ENCODE measurements at regions of chr10 and their contacts with region 1.

Region 1: GRCh38 chr10:56470701-56471100 is 109.6 kb upstream of the ZWINT start:
- DNase-seq: no peak
- ATAC-seq: no peak
- H3K4me3 ChIP-seq: no peak overlapping the region
- H3K27ac ChIP-seq: no peak overlapping the region
- H3K4me1 ChIP-seq: no peaks in the 10 kb centered on the region
- H3K27me3 ChIP-seq: no peaks in the 10 kb centered on the region
- CTCF ChIP-seq: no peak

Region 2: DNA sequence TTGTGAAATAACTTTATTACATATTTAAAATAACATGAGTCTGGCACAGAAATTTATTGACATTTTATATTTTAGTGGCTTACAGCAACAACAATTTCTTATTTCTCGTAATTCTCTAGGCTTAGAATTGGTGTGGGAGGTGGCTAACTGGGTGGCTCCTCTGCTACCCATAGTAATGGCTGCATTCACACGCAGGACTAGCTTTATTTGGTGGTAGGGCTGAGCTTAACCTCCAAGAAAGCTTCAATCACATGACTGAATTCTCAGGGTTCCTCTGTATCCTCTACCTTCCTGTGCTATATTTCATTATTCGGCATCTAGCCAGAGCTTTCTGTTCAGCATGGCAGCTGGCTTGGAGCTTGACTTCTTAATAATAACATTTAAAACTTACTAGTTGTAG is 248.5 kb before region 1 on chr10:
- CTCF ChIA-PET with region 1: no interaction called
- POLR2A ChIA-PET with region 1: no interaction called
- intact Hi-C with region 1: no loop called
- DNase-seq: no peak
- ATAC-seq: no peak
- H3K4me3 ChIP-seq: no peak overlapping the region
- H3K27ac ChIP-seq: no peak overlapping the region
- H3K4me1 ChIP-seq: no peaks in the 10 kb centered on the region
- H3K27me3 ChIP-seq: no peaks in the 10 kb centered on the region
- CTCF ChIP-seq: no peak

Region 3: GRCh38 chr10:56662765-56663447 is 192.2 kb after region 1 on chr10:
- CTCF ChIA-PET with region 1: no interaction called
- POLR2A ChIA-PET with region 1: no interaction called
- intact Hi-C with region 1: no loop called
- DNase-seq: no peak
- ATAC-seq: no peak
- H3K4me3 ChIP-seq: no peak overlapping the region
- H3K27ac ChIP-seq: no peak overlapping the region
- H3K4me1 ChIP-seq: no peaks in the 10 kb centered on the region
- H3K27me3 ChIP-seq: no peaks in the 10 kb centered on the region
- CTCF ChIP-seq: no peak

Region 4: DNA sequence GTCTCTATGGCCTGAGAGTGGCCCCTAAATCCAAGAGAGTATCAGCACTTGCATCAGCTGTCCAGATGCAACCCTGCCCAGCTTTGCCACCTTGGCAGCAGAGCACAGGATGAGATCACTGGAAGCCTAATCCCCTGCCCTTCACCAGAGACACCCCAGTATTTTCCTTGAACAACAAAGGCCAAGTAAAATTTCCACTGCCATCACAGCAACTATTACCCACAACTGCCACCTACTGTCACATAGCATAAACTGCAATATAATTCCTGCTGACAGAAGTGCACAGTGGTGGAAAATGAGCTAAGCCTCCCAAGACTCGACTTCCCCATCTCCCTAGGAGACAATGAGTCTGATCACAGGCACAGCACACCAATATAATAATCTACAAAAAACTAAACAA is 353.1 kb after region 1 on chr10:
- CTCF ChIA-PET with region 1: interaction called, 3 read pairs
- POLR2A ChIA-PET with region 1: no interaction called
- intact Hi-C with region 1: loop called (anchors 5 kb)
- DNase-seq: peak; percentile 28
- ATAC-seq: peak; percentile 29; the same call in 1 of the 2 replicates
- H3K4me3 ChIP-seq: no peak overlapping the region
- H3K27ac ChIP-seq: no peak overlapping the region
- H3K4me1 ChIP-seq: no peaks in the 10 kb centered on the region
- H3K27me3 ChIP-seq: no peaks in the 10 kb centered on the region
- CTCF ChIP-seq: peak; percentile 70

Measured in PC-3 (cell line).